Activated CD8-positive, alpha-beta memory T cell treated with anti-CD3 and anti-CD28 coated beads, Interleukin-2, amount 10 ng/mL, durations not matched to agents 7 days and 5 days (primary cell): ENCODE measurements at regions of chr12 and their contacts with region 1.

Region 1: DNA sequence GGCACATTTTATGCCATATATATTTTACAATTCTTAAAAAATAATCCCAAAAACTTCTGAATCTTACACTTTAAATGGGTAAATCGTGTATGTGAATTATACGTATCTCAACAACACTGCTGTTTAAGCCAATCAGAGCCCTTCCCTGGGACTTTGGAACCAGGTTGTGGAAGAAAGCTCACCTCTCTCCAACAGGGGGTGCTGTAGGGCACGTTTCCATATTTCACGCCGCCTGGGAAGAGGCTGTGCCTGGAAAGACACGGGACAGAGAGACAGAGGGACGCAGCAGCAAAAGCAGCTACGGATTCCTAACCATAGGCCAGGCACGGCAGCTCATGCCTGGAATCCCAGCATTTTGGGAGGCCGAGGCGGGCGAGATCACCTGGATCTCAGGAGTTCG is 29.4 kb upstream of the FBRSL1 start:
- DNase-seq: no peak
- ATAC-seq: no peak
- H3K4me3 Mint-ChIP-seq: no peak overlapping the region
- H3K27ac Mint-ChIP-seq: no peak overlapping the region
- H3K4me1 Mint-ChIP-seq: peaks cover 2% of the 10 kb centered on the region
- H3K27me3 Mint-ChIP-seq: no peaks in the 10 kb centered on the region

Region 2: DNA sequence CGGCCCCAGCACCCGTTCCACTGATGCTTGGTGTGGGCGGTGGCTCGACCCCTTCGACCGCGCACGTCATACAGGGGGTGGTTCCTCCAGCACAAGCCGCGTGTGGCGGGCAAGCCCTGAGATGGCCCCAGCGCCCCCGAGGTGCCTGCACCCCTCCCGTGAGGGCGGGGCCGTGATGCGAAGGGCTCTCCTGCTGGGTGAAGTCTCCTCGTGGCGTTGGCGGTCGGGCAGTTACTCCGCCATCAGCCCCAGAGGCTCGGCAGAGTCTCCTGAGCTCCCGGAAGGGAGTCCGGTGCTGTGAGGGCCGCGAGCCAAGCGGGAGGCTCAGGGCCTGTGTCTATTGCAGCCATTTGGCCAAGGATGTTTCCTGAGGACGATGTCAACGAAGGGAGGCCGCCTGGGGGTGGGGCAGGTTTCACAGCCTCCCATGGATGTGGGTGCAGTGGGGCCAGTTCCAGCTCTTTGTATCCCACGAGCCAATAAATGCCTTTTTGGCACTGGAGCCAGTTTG is 53.1 kb before region 1 on chr12:
- CTCF ChIA-PET with region 1: no interaction called
- DNase-seq: no peak
- ATAC-seq: no peak
- H3K4me3 Mint-ChIP-seq: no peak overlapping the region
- H3K27ac Mint-ChIP-seq: no peak overlapping the region
- H3K4me1 Mint-ChIP-seq: no peaks in the 10 kb centered on the region
- H3K27me3 Mint-ChIP-seq: no peaks in the 10 kb centered on the region

Region 3: GRCh38 chr12:132506328-132507160 is 46.0 kb after region 1 on chr12:
- CTCF ChIA-PET with region 1: no interaction called
- DNase-seq: peak; percentile 75
- ATAC-seq: peak; percentile 86
- H3K4me3 Mint-ChIP-seq: no peak overlapping the region
- H3K27ac Mint-ChIP-seq: peak overlapping the region; percentile 32
- H3K4me1 Mint-ChIP-seq: peaks cover 17% of the 10 kb centered on the region
- H3K27me3 Mint-ChIP-seq: no peaks in the 10 kb centered on the region

Region 4: GRCh38 chr12:132523576-132524331 is 63.2 kb after region 1 on chr12:
- CTCF ChIA-PET with region 1: interaction called, 11 read pairs
- DNase-seq: peak; percentile 78
- ATAC-seq: peak; percentile 87
- H3K4me3 Mint-ChIP-seq: no peak overlapping the region
- H3K27ac Mint-ChIP-seq: no peak overlapping the region
- H3K4me1 Mint-ChIP-seq: no peaks in the 10 kb centered on the region
- H3K27me3 Mint-ChIP-seq: no peaks in the 10 kb centered on the region